Sigmoid colon (tissue), 7 donors: ENCODE measurements at regions of chr9 and their contacts with region 1.

Region 1: GRCh38 chr9:70494221-70494620 is 79.8 kb upstream of the KLF9 start:
- DNase-seq: no peak
- H3K4me3 ChIP-seq: no peak overlapping the region
- H3K27ac ChIP-seq: peak overlapping the region in 2 of 4 donors; percentile 46 to 52
- H3K4me1 ChIP-seq: peaks cover 0 to 27% (median 13%) of the 10 kb centered on the region in 4 donors
- H3K27me3 ChIP-seq: no peaks in the 10 kb centered on the region
- CTCF ChIP-seq: no peak
- EP300 ChIP-seq: peak in 1 of 4 donors; percentile 10
- POLR2A ChIP-seq: no peak

Region 2: DNA sequence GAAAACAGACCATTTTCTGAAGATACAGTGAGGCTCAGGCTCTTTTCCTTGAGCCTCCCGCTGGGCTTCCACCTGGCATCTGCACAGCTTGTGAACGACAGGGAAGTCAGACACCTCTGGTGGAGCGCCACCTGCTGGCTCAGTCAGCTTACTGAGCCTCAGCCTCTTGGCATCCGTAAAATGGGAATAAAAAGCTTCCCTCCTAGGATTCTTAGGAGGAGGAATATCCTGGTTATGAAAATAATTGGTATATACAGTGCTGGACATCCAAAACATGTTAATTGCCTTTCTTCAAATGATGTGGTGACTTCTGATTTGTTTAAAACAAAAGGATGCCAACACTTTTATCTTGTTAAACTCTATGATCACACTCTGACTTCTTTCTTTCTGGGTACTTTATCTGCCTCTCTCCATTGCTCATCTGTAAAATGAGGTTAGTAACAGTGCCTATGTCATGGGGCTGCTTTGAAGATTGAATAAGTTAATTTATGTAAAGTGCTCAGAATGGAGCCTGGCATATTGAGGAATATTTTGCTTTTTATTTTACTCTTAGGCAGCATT is 383.1 kb before region 1 on chr9:
- intact Hi-C with region 1: no loop called
- DNase-seq: peak; percentile 94
- H3K4me3 ChIP-seq: no peak overlapping the region
- H3K27ac ChIP-seq: peak overlapping the region; percentile 42 to 72 (median 65)
- H3K4me1 ChIP-seq: peaks cover 0 to 68% (median 52%) of the 10 kb centered on the region in 4 donors
- H3K27me3 ChIP-seq: no peaks in the 10 kb centered on the region
- CTCF ChIP-seq: peak; percentile 50 to 90 (median 86)
- EP300 ChIP-seq: peak in 1 of 4 donors; percentile 20
- POLR2A ChIP-seq: no peak

Region 3: GRCh38 chr9:70258692-70259511 is 235.3 kb before region 1 on chr9 and contains the start of gene SMC5:
- intact Hi-C with region 1: loop called (anchors 5 kb)
- DNase-seq: peak; percentile 94
- H3K4me3 ChIP-seq: peak within 1 kb of the TSS; percentile 71 to 77 (median 74)
- H3K27ac ChIP-seq: peak within 1 kb of the TSS; percentile 90 to 95 (median 91)
- H3K4me1 ChIP-seq: peaks cover 0 to 74% (median 57%) of the 10 kb centered on the region in 4 donors
- H3K27me3 ChIP-seq: no peaks in the 10 kb centered on the region
- CTCF ChIP-seq: no peak
- EP300 ChIP-seq: no peak
- POLR2A ChIP-seq: peak; percentile 91 to 95
- total RNA-seq, gene SMC5: 20.1 to 31.6 (median 23.4) TPM